MCF 10A (cell line): ENCODE measurements at regions of chr1 and their contacts with region 1.

Region 1: GRCh38 chr1:233904633-233905415 is at the start of gene SLC35F3:
- DNase-seq: peak; percentile 87
- H3K4me3 Mint-ChIP-seq: peak within 1 kb of the TSS; percentile 78
- H3K27ac Mint-ChIP-seq: peak within 1 kb of the TSS; percentile 9
- H3K4me1 Mint-ChIP-seq: peaks cover 22% of the 10 kb centered on the region
- H3K27me3 Mint-ChIP-seq: peaks cover 11% of the 10 kb centered on the region
- CTCF ChIP-seq: peak; percentile 91
- total RNA-seq, gene SLC35F3: 2.9 and 3.3 TPM in 2 replicates

Region 2: DNA sequence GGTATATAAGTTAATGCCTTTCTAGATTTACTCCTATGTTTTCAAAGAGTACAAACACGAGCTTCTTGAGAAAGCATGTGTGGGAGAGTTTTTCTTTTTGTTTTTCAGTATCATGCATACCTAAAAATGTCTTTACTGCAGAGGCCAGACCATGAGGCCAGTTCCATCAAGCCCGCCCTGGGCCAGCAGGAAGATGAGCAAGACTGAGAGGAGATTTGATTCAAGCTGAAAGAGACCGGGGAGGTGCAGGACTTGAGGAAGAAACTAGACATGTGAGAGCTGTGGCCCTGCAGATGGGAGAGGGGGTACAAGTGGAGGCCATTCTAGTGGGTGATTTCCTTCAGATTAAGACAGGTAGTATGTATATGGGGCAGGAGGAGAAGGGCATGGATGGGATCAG is 987.8 kb before region 1 on chr1:
- CTCF ChIA-PET with region 1: no interaction called
- POLR2A ChIA-PET with region 1: no interaction called
- intact Hi-C with region 1: no loop called
- DNase-seq: no peak
- H3K4me3 Mint-ChIP-seq: no peak overlapping the region
- H3K27ac Mint-ChIP-seq: no peak overlapping the region
- H3K4me1 Mint-ChIP-seq: peaks cover 4% of the 10 kb centered on the region
- H3K27me3 Mint-ChIP-seq: no peaks in the 10 kb centered on the region
- CTCF ChIP-seq: no peak

Region 3: GRCh38 chr1:233518349-233518748 is 386.5 kb before region 1 on chr1:
- CTCF ChIA-PET with region 1: no interaction called
- POLR2A ChIA-PET with region 1: interaction called, 3 read pairs
- intact Hi-C with region 1: loop called (anchors 10 kb)
- DNase-seq: peak; percentile 83
- H3K4me3 Mint-ChIP-seq: no peak overlapping the region
- H3K27ac Mint-ChIP-seq: no peak overlapping the region
- H3K4me1 Mint-ChIP-seq: peaks cover 14% of the 10 kb centered on the region
- H3K27me3 Mint-ChIP-seq: no peaks in the 10 kb centered on the region
- CTCF ChIP-seq: peak; percentile 83

Region 4: DNA sequence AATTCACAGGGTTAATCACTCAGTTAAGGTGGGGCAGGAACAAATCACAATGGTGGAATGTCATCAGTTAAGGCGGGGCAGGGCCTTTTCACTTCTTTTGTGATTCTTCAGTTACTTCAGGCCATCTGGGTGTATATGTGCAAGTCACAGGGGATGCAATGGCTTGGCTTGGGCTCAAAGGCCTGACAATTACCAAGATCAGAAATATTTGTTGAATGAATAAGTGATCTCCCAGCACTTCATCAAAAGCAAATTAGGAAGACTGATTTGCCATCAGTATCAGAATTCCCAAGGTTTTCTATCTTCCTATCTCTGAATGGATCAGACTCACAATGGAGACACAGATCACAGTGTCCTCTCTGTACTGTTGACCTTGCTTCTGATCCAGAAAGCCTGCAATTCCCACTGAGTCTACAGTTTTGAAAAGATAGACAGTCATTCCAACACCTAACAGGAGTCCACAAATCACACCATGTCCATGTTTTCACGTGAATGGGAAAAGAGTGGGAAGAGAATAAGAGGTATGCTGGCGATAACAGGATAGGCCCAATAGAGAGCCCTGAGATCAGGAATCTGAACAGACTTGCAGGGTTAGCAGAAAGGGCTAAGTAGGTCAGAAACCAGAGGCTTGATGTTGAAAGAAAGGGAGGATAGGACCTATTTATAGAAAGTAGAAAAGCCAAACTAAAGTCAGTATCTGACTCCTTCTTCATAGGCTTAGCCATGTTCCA is 215.6 kb before region 1 on chr1:
- CTCF ChIA-PET with region 1: no interaction called
- POLR2A ChIA-PET with region 1: no interaction called
- intact Hi-C with region 1: no loop called
- DNase-seq: no peak
- H3K4me3 Mint-ChIP-seq: no peak overlapping the region
- H3K27ac Mint-ChIP-seq: peak overlapping the region; percentile 46
- H3K4me1 Mint-ChIP-seq: peaks cover 32% of the 10 kb centered on the region
- H3K27me3 Mint-ChIP-seq: no peaks in the 10 kb centered on the region
- CTCF ChIP-seq: no peak

Region 5: DNA sequence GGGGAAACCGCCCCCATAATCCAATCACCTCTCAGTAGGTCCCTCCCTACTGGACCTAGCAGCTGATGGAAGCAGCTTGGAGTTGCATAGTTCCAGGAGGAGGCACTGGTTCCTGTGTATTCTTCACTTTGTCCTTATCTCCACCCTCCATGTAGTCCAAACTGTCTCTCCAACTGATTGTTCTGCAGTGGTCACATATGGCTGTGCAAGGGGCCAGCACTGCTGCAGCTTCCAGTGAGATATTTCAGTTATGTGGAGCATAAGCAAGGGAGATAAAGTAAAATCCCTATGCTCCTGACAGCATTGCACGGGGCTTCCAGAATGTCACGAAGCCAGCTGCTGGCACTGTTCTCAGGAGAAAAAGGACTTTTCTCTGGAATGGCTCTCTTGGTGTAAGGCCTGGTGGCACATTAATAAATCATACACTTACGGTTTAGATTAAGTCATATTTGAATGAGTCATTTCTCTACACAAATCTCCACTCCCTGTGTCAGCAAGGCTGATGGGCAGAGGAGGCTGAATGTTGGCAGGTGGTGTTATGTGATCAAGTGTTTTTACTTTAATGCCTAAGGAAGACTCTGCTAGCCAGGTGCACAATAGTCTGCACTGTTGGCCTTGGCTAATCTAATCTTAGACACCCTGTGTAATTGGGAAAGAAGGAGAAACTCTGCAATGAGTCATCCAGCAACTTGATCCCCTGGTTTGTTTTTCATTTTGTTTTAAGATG is 197.5 kb before region 1 on chr1:
- CTCF ChIA-PET with region 1: no interaction called
- POLR2A ChIA-PET with region 1: no interaction called
- intact Hi-C with region 1: loop called (anchors 10 kb)
- DNase-seq: peak; percentile 99
- H3K4me3 Mint-ChIP-seq: no peak overlapping the region
- H3K27ac Mint-ChIP-seq: peak overlapping the region; percentile 87
- H3K4me1 Mint-ChIP-seq: peaks cover 46% of the 10 kb centered on the region
- H3K27me3 Mint-ChIP-seq: no peaks in the 10 kb centered on the region
- CTCF ChIP-seq: no peak

Region 6: GRCh38 chr1:233928123-233928522 is 23.3 kb after region 1 on chr1:
- CTCF ChIA-PET with region 1: interaction called, 12 read pairs
- POLR2A ChIA-PET with region 1: interaction called, 3 read pairs
- intact Hi-C with region 1: no loop called
- DNase-seq: no peak
- H3K4me3 Mint-ChIP-seq: no peak overlapping the region
- H3K27ac Mint-ChIP-seq: no peak overlapping the region
- H3K4me1 Mint-ChIP-seq: no peaks in the 10 kb centered on the region
- H3K27me3 Mint-ChIP-seq: no peaks in the 10 kb centered on the region
- CTCF ChIP-seq: no peak

Region 7: GRCh38 chr1:234022302-234022701 is 117.5 kb after region 1 on chr1:
- CTCF ChIA-PET with region 1: no interaction called
- POLR2A ChIA-PET with region 1: no interaction called
- intact Hi-C with region 1: no loop called
- DNase-seq: no peak
- H3K4me3 Mint-ChIP-seq: no peak overlapping the region
- H3K27ac Mint-ChIP-seq: no peak overlapping the region
- H3K4me1 Mint-ChIP-seq: no peaks in the 10 kb centered on the region
- H3K27me3 Mint-ChIP-seq: no peaks in the 10 kb centered on the region
- CTCF ChIP-seq: no peak

Region 8: GRCh38 chr1:234065794-234066447 is 161.1 kb after region 1 on chr1:
- CTCF ChIA-PET with region 1: interaction called, 8 read pairs
- POLR2A ChIA-PET with region 1: interaction called, 3 read pairs
- intact Hi-C with region 1: loop called (anchors 1 kb)
- DNase-seq: peak; percentile 89
- H3K4me3 Mint-ChIP-seq: no peak overlapping the region
- H3K27ac Mint-ChIP-seq: no peak overlapping the region
- H3K4me1 Mint-ChIP-seq: peaks cover 5% of the 10 kb centered on the region
- H3K27me3 Mint-ChIP-seq: no peaks in the 10 kb centered on the region
- CTCF ChIP-seq: peak; percentile 98